Activated T-helper 1 cell treated with anti-CD3 and anti-CD28 coated beads, Interleukin-12 subunit alpha, Interleukin-12 subunit beta, Interleukin-2, Interleukin-4 antibody, amounts not matched to agents 30 ng/mL and 10 ng/mL and 1 ng/mL, durations not matched to agents 14 hours and 24 hours and 36 hours (primary cell): ENCODE measurements at regions of chr9 and their contacts with region 1.

Region 1: GRCh38 chr9:128771745-128772519 is at the start of gene ZER1:
- DNase-seq: peak; percentile 92
- H3K4me3 Mint-ChIP-seq: peak within 1 kb of the TSS; percentile 98
- H3K27ac Mint-ChIP-seq: peak within 1 kb of the TSS; percentile 95
- H3K4me1 Mint-ChIP-seq: peaks cover 14% of the 10 kb centered on the region
- H3K27me3 Mint-ChIP-seq: no peaks in the 10 kb centered on the region
- total RNA-seq, gene ZER1: 21.1 and 21.5 TPM in 2 replicates

Region 2: GRCh38 chr9:128656416-128657343 is 115.3 kb before region 1 on chr9 and contains the start of gene DYNC2I2:
- intact Hi-C with region 1: loop called (anchors 5 kb)
- DNase-seq: peak; percentile 95
- H3K4me3 Mint-ChIP-seq: peak within 1 kb of the TSS; percentile 91
- H3K27ac Mint-ChIP-seq: peak within 1 kb of the TSS; percentile 100
- H3K4me1 Mint-ChIP-seq: peaks cover 15% of the 10 kb centered on the region
- H3K27me3 Mint-ChIP-seq: no peaks in the 10 kb centered on the region
- total RNA-seq, gene DYNC2I2: 41.5 and 43.9 TPM in 2 replicates

Region 3: GRCh38 chr9:128702445-128702948 is 69.4 kb before region 1 on chr9 and contains the start of gene PKN3:
- intact Hi-C with region 1: loop called (anchors 1 kb)
- DNase-seq: peak; percentile 82
- H3K4me3 Mint-ChIP-seq: peak within 1 kb of the TSS; percentile 86
- H3K27ac Mint-ChIP-seq: peak within 1 kb of the TSS; percentile 77
- H3K4me1 Mint-ChIP-seq: no peaks in the 10 kb centered on the region
- H3K27me3 Mint-ChIP-seq: peaks cover 2% of the 10 kb centered on the region
- total RNA-seq, gene PKN3: 17.7 and 19.3 TPM in 2 replicates

Region 4: DNA sequence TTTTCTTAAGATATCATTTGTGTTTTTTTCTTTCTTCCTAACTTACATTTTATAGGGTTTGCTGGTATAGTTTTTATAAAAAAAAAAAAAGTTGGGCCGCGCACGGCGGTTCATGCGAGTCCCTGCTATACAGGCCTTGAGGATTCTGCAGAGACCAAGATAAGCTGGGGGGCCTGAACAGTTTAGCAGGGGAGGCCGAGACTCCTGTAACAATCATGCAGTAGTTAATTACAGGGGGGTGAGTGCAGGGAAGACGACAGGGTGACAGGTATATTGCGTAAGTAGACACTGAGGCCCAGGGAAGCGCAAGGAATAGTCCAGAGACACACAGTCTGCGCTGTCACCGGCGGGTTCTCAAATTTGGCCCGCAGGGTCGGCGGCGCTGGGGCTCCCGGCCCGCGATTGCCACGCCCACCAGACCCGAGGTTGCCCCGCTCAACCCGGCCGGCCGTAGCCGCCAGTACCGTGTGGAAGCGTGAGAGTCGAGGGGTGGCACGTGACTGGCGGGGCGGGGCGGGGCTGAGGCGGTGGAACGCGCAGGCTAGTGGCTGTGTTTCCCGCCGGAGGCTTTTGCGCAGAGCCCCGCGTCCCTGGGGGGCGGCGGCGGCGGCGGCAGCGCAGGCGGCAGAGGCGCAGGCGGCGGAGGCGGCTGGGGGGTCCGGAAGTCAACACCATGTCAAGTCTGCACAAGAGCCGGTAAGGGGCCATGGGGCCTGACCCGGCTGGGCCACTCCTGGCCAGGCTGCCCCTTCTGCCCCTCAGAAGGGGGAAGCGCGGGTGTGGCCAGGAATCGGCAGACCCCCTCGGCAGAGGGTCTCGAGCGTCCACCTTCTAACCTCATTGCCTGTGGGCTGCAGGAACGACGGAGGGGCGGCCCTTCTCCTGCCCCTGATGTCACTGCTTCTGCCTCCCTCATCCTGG is 15.0 kb after region 1 on chr9 and contains the start of gene TBC1D13:
- intact Hi-C with region 1: loop called (anchors 1 kb)
- DNase-seq: peak; percentile 84
- H3K4me3 Mint-ChIP-seq: peak within 1 kb of the TSS; percentile 97
- H3K27ac Mint-ChIP-seq: peak within 1 kb of the TSS; percentile 89
- H3K4me1 Mint-ChIP-seq: peaks cover 22% of the 10 kb centered on the region
- H3K27me3 Mint-ChIP-seq: no peaks in the 10 kb centered on the region
- total RNA-seq, gene TBC1D13: 21.2 and 22.3 TPM in 2 replicates

Region 5: DNA sequence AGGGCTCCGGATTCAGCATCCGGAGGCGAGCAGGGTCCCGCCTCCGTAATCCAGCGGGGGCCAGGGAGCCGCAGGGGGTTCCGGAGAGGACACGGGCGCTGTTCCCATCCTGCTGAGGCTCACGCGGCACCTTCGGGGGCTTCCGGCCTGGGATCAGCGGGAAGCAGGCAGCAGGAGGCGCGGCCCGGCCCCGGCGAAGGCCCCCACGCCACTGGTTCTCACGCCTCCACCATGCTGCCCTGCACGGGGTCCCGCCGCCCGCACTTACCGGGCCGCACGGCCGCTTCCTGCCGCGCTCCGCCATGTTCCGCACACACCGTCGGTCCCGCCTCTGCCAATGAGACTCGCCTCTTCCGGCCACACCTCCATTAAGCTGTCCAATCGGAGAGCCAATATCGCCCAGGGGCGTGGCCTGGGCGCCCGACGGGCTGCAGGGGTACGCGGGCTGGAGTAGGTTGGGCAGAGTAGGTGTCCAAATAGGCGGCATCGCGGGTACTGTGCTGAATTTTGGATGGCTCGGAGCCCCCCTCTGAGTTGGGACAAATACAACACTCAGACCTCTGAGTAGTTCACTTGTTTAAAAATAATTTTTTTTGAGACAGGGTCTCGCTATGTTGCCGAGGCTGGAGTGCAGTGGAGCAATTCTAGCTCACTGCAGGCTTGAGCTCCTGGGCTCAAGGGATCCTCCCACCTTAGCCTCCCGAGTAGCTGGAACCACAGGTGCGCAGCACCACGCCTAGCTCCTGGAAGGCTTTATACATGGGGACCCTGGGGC is 57.7 kb after region 1 on chr9 and contains the start of gene SPOUT1:
- intact Hi-C with region 1: loop called (anchors 1 kb)
- DNase-seq: peak; percentile 95
- H3K4me3 Mint-ChIP-seq: peak within 1 kb of the TSS; percentile 97
- H3K27ac Mint-ChIP-seq: peak within 1 kb of the TSS; percentile 88
- H3K4me1 Mint-ChIP-seq: peaks cover 23% of the 10 kb centered on the region
- H3K27me3 Mint-ChIP-seq: no peaks in the 10 kb centered on the region
- total RNA-seq, gene SPOUT1: 151 and 158 TPM in 2 replicates

Region 6: GRCh38 chr9:128902351-128903078 is 130.6 kb after region 1 on chr9:
- intact Hi-C with region 1: loop called (anchors 5 kb)
- DNase-seq: peak; percentile 83
- H3K4me3 Mint-ChIP-seq: peak overlapping the region; percentile 66
- H3K27ac Mint-ChIP-seq: peak overlapping the region; percentile 96
- H3K4me1 Mint-ChIP-seq: peaks cover 65% of the 10 kb centered on the region
- H3K27me3 Mint-ChIP-seq: no peaks in the 10 kb centered on the region

Region 7: DNA sequence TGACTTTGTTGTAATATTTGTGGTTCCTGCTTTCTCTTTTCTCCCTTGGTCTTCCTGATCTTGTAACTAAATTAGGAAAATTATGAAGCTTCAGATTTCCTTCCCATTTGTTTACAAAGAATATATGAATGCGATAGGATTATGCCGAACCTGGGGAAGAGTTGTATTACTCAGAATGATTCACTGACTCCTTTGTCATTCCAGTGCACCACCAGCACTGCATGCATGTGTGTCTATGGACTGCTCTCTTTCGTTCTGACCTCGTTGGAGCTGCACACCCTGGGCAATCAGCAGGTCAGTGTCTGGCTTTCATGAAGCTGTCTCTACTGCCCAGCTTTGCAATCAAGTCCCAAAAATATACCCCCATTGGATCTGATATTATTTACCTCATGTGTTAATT is 201.0 kb after region 1 on chr9:
- intact Hi-C with region 1: no loop called
- DNase-seq: no peak
- H3K4me3 Mint-ChIP-seq: no peak overlapping the region
- H3K27ac Mint-ChIP-seq: no peak overlapping the region
- H3K4me1 Mint-ChIP-seq: no peaks in the 10 kb centered on the region
- H3K27me3 Mint-ChIP-seq: no peaks in the 10 kb centered on the region

Region 8: GRCh38 chr9:129028192-129028957 is 256.4 kb after region 1 on chr9 and contains the start of gene SH3GLB2:
- intact Hi-C with region 1: loop called (anchors 5 kb)
- DNase-seq: peak; percentile 85
- H3K4me3 Mint-ChIP-seq: peak within 1 kb of the TSS; percentile 91
- H3K27ac Mint-ChIP-seq: peak within 1 kb of the TSS; percentile 80
- H3K4me1 Mint-ChIP-seq: peaks cover 24% of the 10 kb centered on the region
- H3K27me3 Mint-ChIP-seq: no peaks in the 10 kb centered on the region
- total RNA-seq, gene SH3GLB2: 71.1 and 74.8 TPM in 2 replicates